Activated naive CD4-positive, alpha-beta T cell treated with anti-CD3 and anti-CD28 coated beads for 36 hours (primary cell): ENCODE measurements at regions of chr5 and their contacts with region 1.

Region 1: DNA sequence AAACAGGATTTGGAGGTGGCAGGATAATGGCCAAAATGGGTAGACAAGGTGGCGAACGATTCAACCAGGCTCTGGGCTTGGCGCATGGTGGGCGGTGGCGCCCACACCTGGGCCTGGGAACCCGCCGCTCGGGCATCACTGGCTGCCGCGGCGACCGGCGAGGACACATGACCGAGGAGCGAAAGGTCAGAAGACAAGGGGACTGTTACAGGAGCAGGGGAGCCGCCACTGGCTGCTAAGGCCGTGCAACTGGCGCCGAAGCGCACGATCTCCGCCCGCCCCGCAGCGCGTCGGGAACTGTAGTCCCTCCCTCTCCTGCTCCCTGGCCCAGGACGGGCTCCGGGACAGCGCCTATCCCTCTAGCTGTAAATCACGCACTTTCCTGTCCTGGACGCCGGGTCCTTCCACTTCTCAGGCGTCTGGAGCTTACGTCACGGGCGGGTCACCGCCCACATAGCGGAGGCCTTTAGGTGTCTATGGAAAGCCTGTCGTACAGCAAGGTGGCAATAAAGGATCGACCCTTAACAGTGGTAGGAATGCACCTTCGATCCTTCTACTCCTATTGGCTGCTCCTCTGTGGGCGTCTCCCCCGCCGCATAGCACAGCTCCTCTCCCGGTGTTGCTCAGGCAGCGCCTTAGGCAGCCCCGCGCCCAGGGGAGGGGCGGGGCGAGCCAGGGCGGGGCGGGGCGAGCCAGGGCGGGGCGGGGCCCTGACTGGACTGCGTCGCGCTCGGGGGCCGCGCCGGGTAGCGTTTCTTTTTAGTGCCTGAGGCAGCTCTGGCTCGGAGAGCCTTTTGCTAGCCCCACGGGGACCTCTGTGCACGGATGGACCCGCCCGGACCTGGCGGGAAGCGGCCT is at the start of gene ICE1:
- DNase-seq: peak; percentile 95
- H3K4me3 Mint-ChIP-seq: peak within 1 kb of the TSS; percentile 95
- H3K27ac Mint-ChIP-seq: peak within 1 kb of the TSS; percentile 91
- H3K4me1 Mint-ChIP-seq: peaks cover 19% of the 10 kb centered on the region
- H3K27me3 Mint-ChIP-seq: no peaks in the 10 kb centered on the region
- total RNA-seq, gene ICE1: 19.1 to 20.6 TPM

Region 2: DNA sequence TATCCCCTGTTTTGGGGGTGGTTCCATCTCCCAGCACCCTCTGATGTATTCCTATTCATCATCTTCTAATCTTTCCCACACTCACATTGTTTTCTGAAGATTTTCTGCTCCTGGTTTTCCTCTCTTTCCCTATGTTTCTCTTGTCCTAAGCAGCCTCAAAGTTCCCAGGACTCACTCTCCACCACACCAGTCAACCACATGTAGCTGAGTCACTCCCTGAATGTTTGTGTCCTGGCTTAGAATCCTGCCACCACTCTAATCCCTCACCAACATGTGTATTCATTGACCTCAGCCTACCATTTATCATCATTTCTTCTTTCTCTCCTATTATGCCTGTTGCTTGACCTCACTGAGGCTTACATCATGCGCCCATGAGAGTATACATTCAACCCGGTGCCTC is 564.4 kb before region 1 on chr5:
- CTCF ChIA-PET with region 1: no interaction called
- intact Hi-C with region 1: no loop called
- DNase-seq: no peak
- H3K4me3 Mint-ChIP-seq: no peak overlapping the region
- H3K27ac Mint-ChIP-seq: no peak overlapping the region
- H3K4me1 Mint-ChIP-seq: no peaks in the 10 kb centered on the region
- H3K27me3 Mint-ChIP-seq: peaks cover 7% of the 10 kb centered on the region

Region 3: DNA sequence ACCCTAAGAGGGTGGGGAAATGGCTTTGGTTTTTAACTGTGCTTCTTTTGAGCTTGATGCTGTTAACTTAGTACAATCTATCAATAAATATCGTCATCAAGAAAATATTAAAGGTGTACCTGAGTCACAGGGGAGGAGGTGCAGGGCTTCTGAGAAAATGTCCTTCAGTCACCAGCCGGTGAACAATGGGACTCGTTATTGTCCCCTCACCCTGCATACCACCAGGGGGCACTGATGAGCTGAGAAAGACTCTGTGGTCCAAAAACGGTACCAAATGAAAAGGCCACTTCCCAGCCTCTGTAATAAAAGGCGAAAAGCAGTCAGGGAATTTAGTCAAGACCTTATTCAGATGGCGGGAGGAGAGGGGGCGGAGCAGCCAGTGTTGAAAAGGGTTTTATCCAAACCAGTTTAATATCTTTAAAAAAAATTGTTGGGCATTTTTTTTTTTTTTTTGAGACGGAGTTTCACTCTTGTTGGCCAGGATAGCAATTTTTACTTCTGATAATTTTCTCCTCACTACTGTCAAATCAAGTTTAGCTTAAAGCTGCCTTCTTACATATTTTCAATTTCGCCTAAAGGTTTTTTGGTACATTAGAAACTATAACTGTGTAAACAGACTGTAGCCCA is 554.0 kb before region 1 on chr5:
- CTCF ChIA-PET with region 1: no interaction called
- intact Hi-C with region 1: loop called (anchors 2 kb)
- DNase-seq: peak; percentile 68
- H3K4me3 Mint-ChIP-seq: no peak overlapping the region
- H3K27ac Mint-ChIP-seq: no peak overlapping the region
- H3K4me1 Mint-ChIP-seq: no peaks in the 10 kb centered on the region
- H3K27me3 Mint-ChIP-seq: no peaks in the 10 kb centered on the region

Region 4: GRCh38 chr5:5398046-5398445 is 24.1 kb before region 1 on chr5:
- CTCF ChIA-PET with region 1: no interaction called
- intact Hi-C with region 1: no loop called
- DNase-seq: no peak
- H3K4me3 Mint-ChIP-seq: no peak overlapping the region
- H3K27ac Mint-ChIP-seq: no peak overlapping the region
- H3K4me1 Mint-ChIP-seq: no peaks in the 10 kb centered on the region
- H3K27me3 Mint-ChIP-seq: no peaks in the 10 kb centered on the region